ENCODE measurements at regions of chr13 and their contacts with region 1.

Region 1: DNA sequence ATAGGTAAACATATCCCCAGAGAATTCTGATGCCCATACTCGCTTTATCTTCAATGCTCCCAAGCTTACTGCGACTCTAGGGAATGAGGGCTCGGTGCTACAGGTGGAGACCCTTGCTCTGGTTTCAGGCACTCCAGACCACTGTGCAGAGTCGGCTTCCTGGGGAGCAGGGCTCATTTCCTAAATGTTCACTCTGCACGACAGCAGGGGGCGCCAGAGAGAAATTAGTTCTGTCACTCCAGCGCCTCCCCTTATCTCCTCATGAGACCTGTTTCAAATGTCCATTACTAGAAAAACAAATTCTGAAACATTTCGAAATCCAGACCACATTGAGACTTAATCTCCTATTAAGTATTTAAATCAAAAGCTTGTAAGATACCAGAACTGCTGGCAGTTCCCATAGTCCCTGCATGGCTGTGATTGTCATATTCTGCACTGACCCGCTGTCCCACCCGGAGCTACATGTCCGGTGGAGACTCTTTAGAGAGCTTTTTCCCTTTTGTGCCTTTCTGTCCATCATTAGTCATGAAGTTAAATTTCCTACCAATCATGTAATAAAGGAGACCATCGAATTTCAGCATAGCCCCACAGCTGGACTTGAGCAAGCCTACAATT is 22.4 kb downstream of the EPSTI1 start:
- DNase-seq: peak; percentile 71
- ATAC-seq: peak; percentile 69
- H3K4me3 Mint-ChIP-seq: peak overlapping the region; percentile 41
- H3K27ac Mint-ChIP-seq: peak overlapping the region; percentile 46
- H3K4me1 Mint-ChIP-seq: peaks cover 31% of the 10 kb centered on the region
- H3K27me3 Mint-ChIP-seq: no peaks in the 10 kb centered on the region
- CTCF ChIP-seq: no peak

Region 2: DNA sequence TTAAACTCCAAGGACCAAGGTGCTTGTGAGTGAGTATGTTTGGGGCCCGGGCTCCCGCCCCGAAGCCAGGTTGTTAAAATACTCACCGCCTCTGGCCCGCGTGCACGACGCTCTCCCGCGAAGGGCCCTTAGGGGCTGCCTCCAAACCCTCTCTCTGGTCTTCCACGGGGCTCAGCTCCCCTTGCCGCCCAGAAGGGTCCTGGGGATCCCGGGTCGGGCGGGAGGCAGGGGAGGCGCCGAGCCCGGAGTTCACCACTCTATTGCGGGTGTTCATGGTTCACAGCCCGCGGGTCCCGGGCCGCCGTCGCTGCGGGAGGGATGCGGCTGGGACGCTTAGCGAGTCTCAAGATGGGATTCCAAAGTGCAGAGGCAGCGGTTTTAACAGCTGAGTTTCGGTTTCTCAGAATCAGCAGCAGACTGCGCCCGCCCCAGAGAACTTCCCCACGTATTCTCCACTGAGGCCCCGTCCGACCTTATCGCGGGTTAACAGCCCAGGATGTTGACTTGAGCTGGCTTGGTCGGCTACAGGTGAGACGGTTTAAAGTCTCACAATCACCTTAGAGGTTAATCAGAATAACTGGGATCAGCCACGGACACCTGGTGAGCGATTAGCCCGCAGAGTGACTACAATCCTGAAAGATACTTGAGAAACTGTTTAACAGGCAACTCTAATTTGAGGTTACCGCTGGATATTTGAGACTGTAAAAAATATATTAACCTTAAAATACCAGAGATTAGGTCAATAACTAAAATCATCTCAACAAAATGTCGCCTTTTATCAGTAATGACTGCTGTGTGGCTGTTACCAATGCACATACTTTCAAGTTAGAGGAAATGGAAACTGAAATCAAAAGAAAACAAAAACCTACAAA is 22.5 kb after region 1 on chr13 and contains the start of gene EPSTI1:
- CTCF ChIA-PET with region 1: interaction called, 49 read pairs
- POLR2A ChIA-PET with region 1: interaction called, 34 read pairs
- intact Hi-C with region 1: no loop called
- DNase-seq: peak; percentile 69
- ATAC-seq: peak; percentile 85
- H3K4me3 Mint-ChIP-seq: peak within 1 kb of the TSS; percentile 92
- H3K27ac Mint-ChIP-seq: peak within 1 kb of the TSS; percentile 99
- H3K4me1 Mint-ChIP-seq: peaks cover 58% of the 10 kb centered on the region
- H3K27me3 Mint-ChIP-seq: no peaks in the 10 kb centered on the region
- CTCF ChIP-seq: no peak
- total RNA-seq, gene EPSTI1: 30.6 and 32.8 TPM in 2 replicates

Region 3: GRCh38 chr13:43054803-43055802 is 85.4 kb after region 1 on chr13:
- CTCF ChIA-PET with region 1: interaction called, 7 read pairs
- POLR2A ChIA-PET with region 1: interaction called, 4 read pairs
- intact Hi-C with region 1: loop called (anchors 2 kb)
- DNase-seq: no peak
- ATAC-seq: peak; percentile 53
- H3K4me3 Mint-ChIP-seq: no peak overlapping the region
- H3K27ac Mint-ChIP-seq: no peak overlapping the region
- H3K4me1 Mint-ChIP-seq: peaks cover 47% of the 10 kb centered on the region
- H3K27me3 Mint-ChIP-seq: no peaks in the 10 kb centered on the region
- CTCF ChIP-seq: no peak

Region 4: GRCh38 chr13:43132257-43132656 is 162.6 kb after region 1 on chr13:
- CTCF ChIA-PET with region 1: interaction called, 19 read pairs
- POLR2A ChIA-PET with region 1: interaction called, 3 read pairs
- intact Hi-C with region 1: loop called (anchors 2 kb)
- DNase-seq: no peak
- ATAC-seq: peak; percentile 45
- H3K4me3 Mint-ChIP-seq: no peak overlapping the region
- H3K27ac Mint-ChIP-seq: no peak overlapping the region
- H3K4me1 Mint-ChIP-seq: peaks cover 16% of the 10 kb centered on the region
- H3K27me3 Mint-ChIP-seq: peaks cover 33% of the 10 kb centered on the region
- CTCF ChIP-seq: no peak

Region 5: DNA sequence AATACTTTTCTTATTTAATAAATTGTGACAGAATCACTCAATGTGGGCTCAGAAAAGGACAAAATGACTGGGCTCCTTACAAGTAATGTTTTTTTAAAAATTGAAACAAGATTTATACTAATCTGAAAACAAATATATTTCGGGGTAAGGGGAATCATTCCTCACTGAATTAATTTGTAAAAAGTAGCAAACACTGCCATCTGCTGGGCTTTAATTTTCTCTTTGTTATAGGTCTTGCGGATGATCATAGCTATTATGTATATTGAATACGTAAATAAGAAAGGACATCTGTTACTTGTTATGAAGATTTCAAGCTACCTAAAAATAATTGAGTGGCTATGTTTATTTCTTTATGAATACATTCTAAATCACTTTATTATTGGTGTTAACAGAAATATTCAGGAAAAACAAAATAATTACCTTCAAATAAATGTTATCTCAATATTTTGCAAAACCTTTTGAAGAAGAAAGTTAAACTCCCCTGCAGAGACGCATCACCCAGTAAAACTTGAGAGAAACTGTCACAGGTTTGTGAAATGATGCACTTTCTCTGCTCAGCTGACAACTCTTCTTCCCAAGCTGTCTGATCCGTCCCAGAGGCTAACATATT is 834.9 kb after region 1 on chr13:
- CTCF ChIA-PET with region 1: interaction called, 12 read pairs
- POLR2A ChIA-PET with region 1: no interaction called
- intact Hi-C with region 1: loop called (anchors 2 kb)
- DNase-seq: no peak
- ATAC-seq: no peak
- H3K4me3 Mint-ChIP-seq: no peak overlapping the region
- H3K27ac Mint-ChIP-seq: no peak overlapping the region
- H3K4me1 Mint-ChIP-seq: no peaks in the 10 kb centered on the region
- H3K27me3 Mint-ChIP-seq: peaks cover 7% of the 10 kb centered on the region
- CTCF ChIP-seq: no peak

Region 6: GRCh38 chr13:44435142-44435982 is 1465.7 kb after region 1 on chr13:
- CTCF ChIA-PET with region 1: no interaction called
- POLR2A ChIA-PET with region 1: no interaction called
- intact Hi-C with region 1: loop called (anchors 10 kb)
- DNase-seq: peak; percentile 78
- ATAC-seq: peak; percentile 90
- H3K4me3 Mint-ChIP-seq: peak overlapping the region; percentile 85
- H3K27ac Mint-ChIP-seq: peak overlapping the region; percentile 69
- H3K4me1 Mint-ChIP-seq: peaks cover 28% of the 10 kb centered on the region
- H3K27me3 Mint-ChIP-seq: peaks cover 8% of the 10 kb centered on the region
- CTCF ChIP-seq: no peak